ENCODE measurements at regions of chr3 and their contacts with region 1.

Region 1: DNA sequence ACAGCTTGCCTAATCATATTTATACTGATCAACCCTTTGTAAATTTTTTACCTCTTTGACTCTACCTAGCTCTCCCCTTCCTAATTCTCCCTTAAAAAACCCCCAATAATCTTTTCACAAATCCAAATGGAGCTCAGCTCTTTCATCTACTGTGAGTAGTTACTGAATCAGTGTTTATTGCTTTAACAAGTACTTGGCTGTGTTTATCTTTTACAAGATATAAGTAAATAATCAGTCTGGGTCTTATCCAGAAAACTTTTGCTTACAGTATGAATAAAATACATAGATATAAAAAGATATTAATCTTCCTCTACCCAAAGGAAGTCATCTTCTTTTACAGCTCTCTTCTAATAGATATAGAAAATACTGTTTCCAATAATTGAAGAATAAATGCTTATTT is 366.4 kb downstream of the RAP2B start:
- DNase-seq: no peak
- H3K4me3 ChIP-seq: no peak overlapping the region
- H3K27ac ChIP-seq: no peak overlapping the region
- H3K4me1 ChIP-seq: no peaks in the 10 kb centered on the region
- CTCF ChIP-seq: no peak

Region 2: GRCh38 chr3:153539263-153539662 is 10.8 kb after region 1 on chr3:
- CTCF ChIA-PET with region 1: no interaction called
- POLR2A ChIA-PET with region 1: interaction called, 14 read pairs
- intact Hi-C with region 1: no loop called
- DNase-seq: no peak
- H3K4me3 ChIP-seq: no peak overlapping the region
- H3K27ac ChIP-seq: no peak overlapping the region
- H3K4me1 ChIP-seq: no peaks in the 10 kb centered on the region
- CTCF ChIP-seq: no peak

Region 3: GRCh38 chr3:153829606-153830170 is 301.2 kb after region 1 on chr3:
- CTCF ChIA-PET with region 1: no interaction called
- POLR2A ChIA-PET with region 1: no interaction called
- intact Hi-C with region 1: no loop called
- DNase-seq: no peak
- H3K4me3 ChIP-seq: no peak overlapping the region
- H3K27ac ChIP-seq: no peak overlapping the region
- H3K4me1 ChIP-seq: no peaks in the 10 kb centered on the region
- CTCF ChIP-seq: no peak